A549 (cell line): ENCODE measurements at regions of chr6 and their contacts with region 1.

Region 1: DNA sequence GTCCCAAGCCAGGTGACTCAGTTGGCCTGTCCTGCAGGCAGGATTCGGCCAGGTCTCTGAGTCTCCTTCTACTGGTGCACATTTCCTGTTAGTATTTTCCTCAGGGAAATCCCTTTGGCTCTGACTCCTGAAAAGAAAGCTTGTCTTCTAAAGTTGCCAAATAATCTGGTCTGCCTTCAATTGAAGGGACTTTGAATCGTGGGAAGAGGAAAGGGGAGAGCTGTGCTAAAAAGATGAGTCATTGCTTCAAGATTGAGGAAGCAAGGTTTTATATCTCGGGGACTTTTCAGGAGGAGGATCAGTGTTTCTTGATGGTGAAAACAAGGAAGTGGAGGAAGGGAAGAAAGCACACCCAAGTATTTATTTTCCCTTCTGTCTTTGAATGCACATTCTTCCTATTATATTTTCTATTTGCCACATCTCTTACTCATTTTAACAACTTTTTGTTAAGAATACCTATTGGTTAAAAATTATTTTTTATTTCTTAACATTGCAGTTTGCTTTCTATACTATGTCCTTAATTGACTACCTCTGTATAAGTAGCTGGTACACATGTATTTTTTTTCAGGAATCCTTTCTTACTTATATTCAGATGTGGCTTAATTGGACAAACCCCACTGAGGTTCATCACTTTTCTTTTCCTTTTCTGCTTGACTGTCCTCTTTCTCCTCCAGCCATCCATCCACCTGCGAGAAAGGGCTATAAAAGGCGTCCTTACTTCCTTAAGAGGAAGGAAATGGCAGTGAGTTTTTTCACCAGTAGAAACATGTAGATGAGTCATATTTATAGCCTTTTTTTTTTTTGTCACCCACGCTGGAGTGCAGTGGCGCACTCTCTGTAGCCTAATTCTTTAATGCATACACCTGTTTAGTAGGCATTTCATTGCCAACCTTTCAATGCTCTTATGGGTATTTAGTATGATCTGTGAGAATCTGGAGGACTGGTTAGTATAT is 15.0 kb upstream of the IFNGR1 start:
- DNase-seq: peak; percentile 49 to 83
- ATAC-seq: peak; percentile 67 to 76; a peak in 5 of 6 replicates
- H3K4me3 ChIP-seq: no peak overlapping the region
- H3K27ac ChIP-seq: peak overlapping the region; percentile 88 to 91
- H3K4me1 ChIP-seq: peaks cover 45% of the 10 kb centered on the region
- CTCF ChIP-seq: no peak
- EP300 ChIP-seq: no peak
- POLR2A ChIP-seq: no peak
- RAD21 ChIP-seq: no peak

Region 2: DNA sequence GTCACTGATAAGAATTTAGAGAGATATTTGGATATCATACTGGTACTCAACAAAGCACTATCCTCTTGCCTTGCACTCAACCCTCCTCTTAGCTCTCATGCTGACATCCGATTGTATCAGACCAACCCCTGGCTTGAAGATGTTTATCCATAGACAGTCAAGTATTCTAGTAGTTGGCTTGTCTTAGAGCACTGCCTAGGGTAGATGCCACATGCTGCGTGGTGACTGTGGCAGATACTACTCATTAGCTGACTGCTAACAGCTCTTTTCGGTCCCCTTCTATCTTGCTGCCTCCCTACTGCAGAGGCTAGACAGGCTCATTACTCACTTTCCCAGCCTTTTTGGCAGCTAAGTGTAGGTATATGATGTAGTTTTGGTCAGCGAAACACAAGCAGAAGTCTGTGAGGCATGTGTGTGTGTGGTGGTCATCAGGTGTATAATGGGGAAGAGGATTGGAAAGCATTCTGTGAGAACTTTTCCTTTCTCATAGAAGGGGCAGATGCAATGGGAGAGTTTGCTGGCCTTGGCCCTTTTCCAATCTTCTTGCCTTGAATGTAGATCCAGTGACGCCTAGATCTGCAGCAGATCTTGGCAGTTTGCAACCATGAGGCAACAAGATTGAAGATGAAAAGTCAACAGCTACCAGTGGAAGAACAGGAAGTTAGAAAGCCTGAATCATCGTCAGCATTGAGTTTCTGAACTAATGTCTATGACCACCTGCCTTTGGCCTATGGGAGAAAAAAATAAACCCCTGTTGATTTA is 10.6 kb before region 1 on chr6:
- CTCF ChIA-PET with region 1: interaction called, 4 read pairs
- POLR2A ChIA-PET with region 1: interaction called, 17 read pairs
- DNase-seq: peak in 1 of 2 experiments; percentile 75
- ATAC-seq: no peak
- H3K4me3 ChIP-seq: no peak overlapping the region
- H3K27ac ChIP-seq: peak overlapping the region; percentile 69 to 78; a peak in 5 of 6 replicates
- H3K4me1 ChIP-seq: peaks cover 31% of the 10 kb centered on the region
- CTCF ChIP-seq: no peak
- EP300 ChIP-seq: no peak
- POLR2A ChIP-seq: no peak
- RAD21 ChIP-seq: no peak

Region 3: DNA sequence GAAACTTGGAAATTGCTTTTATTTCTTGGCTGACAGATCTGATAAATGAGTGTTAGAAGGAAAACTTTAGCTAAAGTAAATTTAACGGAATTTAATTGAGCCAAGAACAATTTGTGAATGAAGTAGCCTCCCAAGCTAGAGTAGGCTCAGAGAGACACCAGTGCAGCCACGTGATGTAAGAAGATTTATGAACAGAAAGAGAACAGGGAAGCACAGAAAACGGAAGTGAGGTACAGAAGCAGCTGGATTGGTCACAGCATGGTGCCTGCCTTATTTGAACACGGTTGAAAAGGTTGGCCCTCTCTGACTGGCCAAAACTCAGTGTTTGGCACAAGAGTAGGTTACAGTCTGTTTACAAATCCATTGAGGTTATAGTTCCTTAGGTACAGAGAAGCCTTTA is 14.5 kb after region 1 on chr6:
- CTCF ChIA-PET with region 1: no interaction called
- POLR2A ChIA-PET with region 1: no interaction called
- DNase-seq: no peak
- ATAC-seq: no peak
- H3K4me3 ChIP-seq: no peak overlapping the region
- H3K27ac ChIP-seq: 0 out of 6 replicates have a peak overlapping the region, but pooled peaks of 1 of the 2 experiments have one; percentile 21
- H3K4me1 ChIP-seq: peaks cover 8% of the 10 kb centered on the region; the same call in 1 of the 3 replicates
- CTCF ChIP-seq: no peak
- EP300 ChIP-seq: no peak
- POLR2A ChIP-seq: no peak
- RAD21 ChIP-seq: no peak

Region 4: GRCh38 chr6:137283940-137284810 is 50.0 kb after region 1 on chr6:
- CTCF ChIA-PET with region 1: no interaction called
- POLR2A ChIA-PET with region 1: no interaction called
- DNase-seq: no peak
- ATAC-seq: no peak
- H3K4me3 ChIP-seq: no peak overlapping the region
- H3K27ac ChIP-seq: no peak overlapping the region
- H3K4me1 ChIP-seq: no peaks in the 10 kb centered on the region
- CTCF ChIP-seq: no peak
- EP300 ChIP-seq: no peak
- POLR2A ChIP-seq: no peak
- RAD21 ChIP-seq: no peak